A673 (cell line): ENCODE measurements at regions of chr13 and their contacts with region 1.

Region 1: GRCh38 chr13:21297914-21298831 is 121.7 kb downstream of the MRPL57 start:
- DNase-seq: peak; percentile 95
- H3K4me3 ChIP-seq: peak overlapping the region; percentile 86
- H3K27ac ChIP-seq: peak overlapping the region; percentile 70
- H3K4me1 ChIP-seq: peaks cover 25% of the 10 kb centered on the region
- H3K27me3 ChIP-seq: no peaks in the 10 kb centered on the region
- CTCF ChIP-seq: peak; percentile 92

Region 2: GRCh38 chr13:21202764-21203538 is 95.2 kb before region 1 on chr13:
- CTCF ChIA-PET with region 1: interaction called, 8 read pairs
- POLR2A ChIA-PET with region 1: interaction called, 3 read pairs
- intact Hi-C with region 1: loop called (anchors 2 kb)
- DNase-seq: no peak
- H3K4me3 ChIP-seq: no peak overlapping the region
- H3K27ac ChIP-seq: peak overlapping the region; percentile 31
- H3K4me1 ChIP-seq: peaks cover 21% of the 10 kb centered on the region
- H3K27me3 ChIP-seq: no peaks in the 10 kb centered on the region
- CTCF ChIP-seq: no peak

Region 3: GRCh38 chr13:21225841-21226581 is 72.2 kb before region 1 on chr13:
- CTCF ChIA-PET with region 1: no interaction called
- POLR2A ChIA-PET with region 1: no interaction called
- intact Hi-C with region 1: no loop called
- DNase-seq: no peak
- H3K4me3 ChIP-seq: no peak overlapping the region
- H3K27ac ChIP-seq: no peak overlapping the region
- H3K4me1 ChIP-seq: peaks cover 8% of the 10 kb centered on the region
- H3K27me3 ChIP-seq: no peaks in the 10 kb centered on the region
- CTCF ChIP-seq: no peak

Region 4: GRCh38 chr13:21240586-21240985 is 57.6 kb before region 1 on chr13:
- CTCF ChIA-PET with region 1: no interaction called
- POLR2A ChIA-PET with region 1: no interaction called
- intact Hi-C with region 1: loop called (anchors 5 kb)
- DNase-seq: peak; percentile 96
- H3K4me3 ChIP-seq: no peak overlapping the region
- H3K27ac ChIP-seq: peak overlapping the region; percentile 84
- H3K4me1 ChIP-seq: peaks cover 34% of the 10 kb centered on the region
- H3K27me3 ChIP-seq: no peaks in the 10 kb centered on the region
- CTCF ChIP-seq: no peak

Region 5: DNA sequence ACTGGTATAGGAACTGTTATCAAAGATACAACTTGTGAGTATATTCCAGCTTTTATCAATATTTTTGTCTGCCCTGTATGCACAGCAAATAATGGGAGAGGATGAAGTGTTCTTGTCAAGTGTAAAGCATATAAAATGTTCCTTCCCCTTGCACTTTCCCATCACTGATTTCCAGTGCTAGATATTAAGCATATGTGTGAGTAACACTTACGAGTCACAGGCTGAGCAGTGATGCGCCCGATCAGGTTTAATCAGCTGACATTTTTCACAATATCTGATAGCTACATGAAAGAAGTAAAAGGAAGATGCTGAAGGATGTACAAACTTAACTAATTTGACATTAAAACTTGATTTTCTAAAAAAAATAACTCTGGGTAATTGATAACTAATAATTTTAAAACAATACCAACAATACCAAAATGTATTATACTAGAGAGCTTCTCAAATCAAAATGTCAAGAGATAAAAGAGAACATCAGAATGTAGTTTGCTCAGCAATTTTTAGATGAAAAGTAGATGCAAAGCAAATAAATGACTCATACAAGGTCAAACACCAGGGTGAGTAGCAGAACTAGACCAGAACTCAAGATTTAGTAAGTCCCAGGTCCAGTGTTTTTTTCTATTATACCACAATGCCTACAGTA is 104.5 kb after region 1 on chr13:
- CTCF ChIA-PET with region 1: no interaction called
- POLR2A ChIA-PET with region 1: no interaction called
- intact Hi-C with region 1: loop called (anchors 5 kb)
- DNase-seq: peak; percentile 23
- H3K4me3 ChIP-seq: no peak overlapping the region
- H3K27ac ChIP-seq: no peak overlapping the region
- H3K4me1 ChIP-seq: peaks cover 46% of the 10 kb centered on the region
- H3K27me3 ChIP-seq: no peaks in the 10 kb centered on the region
- CTCF ChIP-seq: no peak

Region 6: GRCh38 chr13:21458813-21459701 is 160.9 kb after region 1 on chr13 and contains the start of gene ZDHHC20:
- CTCF ChIA-PET with region 1: interaction called, 3 read pairs
- POLR2A ChIA-PET with region 1: no interaction called
- intact Hi-C with region 1: loop called (anchors 5 kb)
- DNase-seq: peak; percentile 89
- H3K4me3 ChIP-seq: peak within 1 kb of the TSS; percentile 80
- H3K27ac ChIP-seq: peak within 1 kb of the TSS; percentile 83
- H3K4me1 ChIP-seq: no peaks in the 10 kb centered on the region
- H3K27me3 ChIP-seq: no peaks in the 10 kb centered on the region
- CTCF ChIP-seq: no peak
- total RNA-seq, gene ZDHHC20: 98.9 and 110 TPM in 2 replicates

Region 7: DNA sequence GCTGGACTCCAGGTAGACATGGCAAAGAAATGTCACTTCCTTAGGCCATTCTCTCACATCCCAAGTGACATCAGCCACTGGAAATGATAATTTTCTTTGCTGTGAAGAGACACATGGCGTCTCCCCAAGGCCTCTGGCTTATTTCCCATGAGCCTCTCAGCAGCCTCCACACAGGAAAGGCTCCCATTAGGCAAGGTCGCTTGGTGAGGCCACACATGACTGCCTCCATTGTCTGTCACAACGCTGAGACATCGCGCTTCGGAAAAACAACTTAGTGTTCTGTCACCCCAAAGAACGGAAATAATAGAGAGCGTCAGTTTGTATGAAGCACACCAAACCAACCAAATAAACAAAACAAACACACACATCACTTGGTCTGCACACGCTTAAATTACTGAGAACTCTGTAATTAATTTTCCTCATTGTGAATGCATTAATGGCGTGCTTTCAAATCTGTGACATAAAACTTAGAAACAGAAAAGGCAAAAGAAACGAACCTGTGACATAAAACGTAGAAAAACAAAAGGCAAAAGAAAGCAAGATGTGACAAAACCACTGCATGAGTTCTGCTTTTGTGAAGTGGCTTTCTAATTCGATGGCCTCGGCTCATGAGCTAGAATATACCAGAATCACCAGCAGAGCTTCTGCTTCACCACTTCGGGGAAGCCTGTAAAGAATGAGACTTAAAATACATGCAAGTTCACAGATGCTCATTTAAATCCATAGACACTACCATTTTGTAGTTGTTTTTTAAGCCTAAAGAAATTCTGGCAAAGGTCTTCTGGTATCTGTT is 1478.4 kb after region 1 on chr13:
- CTCF ChIA-PET with region 1: no interaction called
- POLR2A ChIA-PET with region 1: no interaction called
- intact Hi-C with region 1: loop called (anchors 5 kb)
- DNase-seq: peak; percentile 75
- H3K4me3 ChIP-seq: no peak overlapping the region
- H3K27ac ChIP-seq: peak overlapping the region; percentile 70
- H3K4me1 ChIP-seq: peaks cover 25% of the 10 kb centered on the region
- H3K27me3 ChIP-seq: no peaks in the 10 kb centered on the region
- CTCF ChIP-seq: no peak